H1 (cell line): ENCODE measurements at regions of chr7 and their contacts with region 1.

Region 1: GRCh38 chr7:34889951-34890350 is 147.3 kb downstream of the DPY19L1 start:
- DNase-seq: no peak
- H3K4me3 ChIP-seq: no peak overlapping the region
- H3K27ac ChIP-seq: no peak overlapping the region
- H3K4me1 ChIP-seq: no peaks in the 10 kb centered on the region
- H3K27me3 ChIP-seq: no peaks in the 10 kb centered on the region
- CTCF ChIP-seq: no peak
- EP300 ChIP-seq: no peak
- POLR2A ChIP-seq: no peak
- RAD21 ChIP-seq: no peak

Region 2: GRCh38 chr7:34900891-34901513 is 11.1 kb after region 1 on chr7:
- CTCF ChIA-PET with region 1: interaction called, 11 read pairs
- POLR2A ChIA-PET with region 1: no interaction called
- DNase-seq: peak in 1 of 2 experiments; percentile 63
- H3K4me3 ChIP-seq: no peak overlapping the region
- H3K27ac ChIP-seq: no peak overlapping the region
- H3K4me1 ChIP-seq: peaks cover 2 to 10% (median 9%) of the 10 kb centered on the region in 4 experiments; a peak in 5 of 7 replicates
- H3K27me3 ChIP-seq: no peaks in the 10 kb centered on the region
- CTCF ChIP-seq: peak in 2 of 3 experiments; percentile 69 to 84; a peak in 3 of 4 replicates
- EP300 ChIP-seq: no peak
- POLR2A ChIP-seq: no peak
- RAD21 ChIP-seq: peak; percentile 49 to 72